Heart left ventricle (tissue), 16 donors: ENCODE measurements at regions of chr9 and their contacts with region 1.

Region 1: DNA sequence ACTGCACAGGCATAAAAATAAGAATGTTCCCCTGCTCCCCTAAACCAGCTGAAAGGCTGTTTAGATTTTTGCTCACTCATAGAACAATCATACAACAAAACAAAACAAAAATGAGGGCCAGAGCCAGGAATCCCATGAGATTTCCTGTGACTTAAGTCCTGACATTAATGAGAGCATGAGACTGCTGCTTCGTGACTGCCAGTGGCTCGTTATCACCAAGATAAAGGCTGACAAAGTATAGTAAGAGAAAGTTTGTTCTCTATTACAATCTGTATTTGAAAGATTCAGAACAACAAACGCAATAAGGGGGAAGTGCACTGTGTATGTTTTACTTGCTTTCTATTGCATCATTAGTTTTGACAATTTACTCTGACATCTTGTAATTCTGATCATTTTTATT is 837.1 kb upstream of the C9orf72 start:
- DNase-seq: no peak
- ATAC-seq: no peak
- H3K4me3 ChIP-seq: no peak overlapping the region
- H3K27ac ChIP-seq: no peak overlapping the region
- H3K4me1 ChIP-seq: no peaks in the 10 kb centered on the region
- H3K27me3 ChIP-seq: no peaks in the 10 kb centered on the region
- CTCF ChIP-seq: no peak
- POLR2A ChIP-seq: no peak

Region 2: DNA sequence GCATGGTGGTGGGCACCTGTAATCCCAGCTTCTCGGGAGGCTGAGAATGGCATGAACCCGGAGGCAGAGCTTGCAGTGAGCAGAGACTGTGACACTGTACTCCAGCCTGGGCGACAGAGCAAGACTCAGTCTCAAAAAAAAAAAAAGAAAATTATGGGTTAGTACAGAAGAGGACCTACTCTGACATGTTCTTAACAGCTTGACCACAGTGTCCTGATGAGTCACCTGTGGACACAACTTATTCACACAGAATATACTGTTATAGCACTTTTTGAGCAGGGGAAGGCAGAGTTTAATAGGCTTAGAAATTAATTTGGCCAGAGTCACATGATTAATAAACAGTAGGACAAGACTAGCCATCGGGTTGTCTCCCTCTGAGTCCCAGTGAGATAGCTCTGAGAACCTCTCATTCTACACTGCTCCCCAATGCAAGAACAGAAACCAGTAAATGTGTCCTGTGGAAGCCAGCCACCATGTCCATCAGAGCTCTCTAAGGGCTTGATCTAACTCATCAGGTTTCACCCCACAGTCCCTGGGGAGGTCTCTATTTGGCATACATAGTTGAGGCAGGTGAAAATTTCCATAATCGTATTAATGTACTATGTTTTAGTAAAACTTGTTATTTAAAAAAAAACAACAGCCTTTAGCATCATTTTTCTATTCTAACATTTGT is 240.8 kb after region 1 on chr9:
- intact Hi-C with region 1: loop called in 1 of 10 experiments (anchors 5 kb)
- DNase-seq: no peak
- ATAC-seq: no peak
- H3K4me3 ChIP-seq: no peak overlapping the region
- H3K27ac ChIP-seq: no peak overlapping the region
- H3K4me1 ChIP-seq: no peaks in the 10 kb centered on the region
- H3K27me3 ChIP-seq: no peaks in the 10 kb centered on the region
- CTCF ChIP-seq: no peak
- POLR2A ChIP-seq: no peak